ENCODE measurements at regions of chr7 and their contacts with region 1.

Region 1: GRCh38 chr7:115654384-115655214 is 376.0 kb downstream of the TFEC start:
- DNase-seq: no peak
- H3K4me3 ChIP-seq: no peak overlapping the region
- H3K27ac ChIP-seq: no peak overlapping the region
- H3K4me1 ChIP-seq: no peaks in the 10 kb centered on the region
- H3K27me3 ChIP-seq: no peaks in the 10 kb centered on the region
- CTCF ChIP-seq: no peak

Region 2: GRCh38 chr7:114130866-114131265 is 1523.7 kb before region 1 on chr7:
- CTCF ChIA-PET with region 1: no interaction called
- POLR2A ChIA-PET with region 1: interaction called, 11 read pairs
- intact Hi-C with region 1: no loop called
- DNase-seq: no peak
- H3K4me3 ChIP-seq: no peak overlapping the region
- H3K27ac ChIP-seq: no peak overlapping the region
- H3K4me1 ChIP-seq: no peaks in the 10 kb centered on the region
- H3K27me3 ChIP-seq: peaks cover 38% of the 10 kb centered on the region
- CTCF ChIP-seq: no peak